Right lobe of liver (tissue), 6 donors: ENCODE measurements at regions of chr1 and their contacts with region 1.

Region 1: DNA sequence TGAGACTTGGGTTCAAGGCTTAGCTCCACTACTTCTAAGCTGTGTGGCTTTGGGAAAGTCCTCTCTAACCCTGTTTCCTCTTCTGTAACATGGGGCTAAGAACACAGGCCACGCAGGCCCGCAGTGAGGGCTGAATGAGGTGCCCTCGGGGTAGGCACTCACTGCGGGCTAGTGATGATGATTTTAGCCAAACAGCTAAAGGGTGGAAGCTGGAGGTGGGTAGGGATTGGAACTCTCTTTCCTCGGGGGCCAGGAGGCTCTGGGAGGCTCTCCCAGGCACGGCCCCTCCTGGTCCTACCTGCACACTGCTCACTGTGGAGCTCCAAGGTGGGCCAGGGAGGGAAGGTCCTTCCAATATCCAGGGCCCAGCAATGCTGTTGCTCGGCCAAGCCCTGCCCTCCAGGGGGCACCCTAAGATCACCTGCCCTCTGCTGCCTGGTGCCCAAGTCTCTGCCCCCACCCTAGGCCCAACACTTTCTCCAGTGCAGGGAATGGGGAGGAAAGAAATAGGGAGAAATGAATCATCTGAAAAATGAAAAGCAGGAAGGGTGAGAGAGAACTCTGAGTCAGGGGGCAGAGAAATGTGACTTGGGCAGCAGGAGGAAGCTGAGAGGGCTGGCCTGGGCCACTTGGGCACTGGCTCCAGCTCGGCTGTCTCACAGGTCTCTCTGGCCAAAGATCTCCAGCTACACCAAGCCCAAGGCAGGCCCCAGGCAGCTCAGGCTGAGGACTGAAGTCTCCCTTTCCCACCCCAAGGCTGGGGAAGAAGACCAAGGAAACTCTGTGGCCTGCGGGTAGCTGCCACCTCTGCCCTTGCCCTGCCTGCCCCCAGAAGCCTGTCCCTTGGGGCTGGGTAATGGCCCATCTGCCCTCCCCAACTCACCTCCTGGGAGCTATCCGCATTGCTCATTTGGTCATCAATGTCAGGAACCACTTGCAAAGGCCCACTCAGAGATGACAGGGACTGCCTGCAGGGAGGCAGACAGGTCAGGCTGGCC is 19.3 kb upstream of the EVA1B start:
- DNase-seq: peak in 1 of 3 donors; percentile 61
- ATAC-seq: peak; percentile 66 to 68 (median 66)
- H3K4me3 ChIP-seq: no peak overlapping the region
- H3K27ac ChIP-seq: no peak overlapping the region
- H3K4me1 ChIP-seq: no peaks in the 10 kb centered on the region
- H3K27me3 ChIP-seq: no peaks in the 10 kb centered on the region
- CTCF ChIP-seq: peak; percentile 54 to 69 (median 58)
- POLR2A ChIP-seq: no peak

Region 2: GRCh38 chr1:36420836-36421664 is 78.3 kb after region 1 on chr1:
- intact Hi-C with region 1: loop called (anchors 5 to 10 kb)
- DNase-seq: peak; percentile 82 to 88 (median 83)
- ATAC-seq: peak; percentile 99 to 100 (median 100)
- H3K4me3 ChIP-seq: no peak overlapping the region
- H3K27ac ChIP-seq: no peak overlapping the region
- H3K4me1 ChIP-seq: peaks cover 0 to 4% (median 0%) of the 10 kb centered on the region in 4 donors
- H3K27me3 ChIP-seq: no peaks in the 10 kb centered on the region
- CTCF ChIP-seq: peak; percentile 85 to 96 (median 95)
- POLR2A ChIP-seq: no peak